HepG2 (cell line): ENCODE measurements at regions of chr2 and their contacts with region 1.

Region 1: GRCh38 chr2:74864846-74865722 is 31.2 kb downstream of the HK2 start:
- DNase-seq: no peak
- ATAC-seq: peak; percentile 60
- H3K4me3 ChIP-seq: no peak overlapping the region
- H3K27ac ChIP-seq: no peak overlapping the region
- H3K4me1 ChIP-seq: peaks cover 54% of the 10 kb centered on the region
- H3K27me3 ChIP-seq: no peaks in the 10 kb centered on the region
- CTCF ChIP-seq: peak; percentile 54
- EP300 ChIP-seq: no peak
- POLR2A ChIP-seq: peak in 1 of 2 experiments; percentile 24; a peak in 1 of 4 replicates
- RAD21 ChIP-seq: no peak

Region 2: DNA sequence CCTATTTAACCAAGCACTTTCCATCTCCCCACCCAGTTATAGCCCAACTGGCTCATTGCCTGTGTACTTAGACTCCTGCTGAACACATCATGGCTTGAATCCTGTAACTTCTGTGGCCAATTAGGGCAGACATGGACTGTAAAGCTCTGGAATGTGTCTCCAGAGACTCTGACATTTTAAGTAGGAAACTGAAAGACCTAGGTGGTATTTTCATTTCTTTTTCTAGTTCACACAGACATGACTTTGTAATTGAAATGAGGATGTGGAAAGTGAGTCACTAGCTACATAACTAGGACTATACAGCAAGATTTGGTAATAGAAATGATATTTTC is 298.4 kb before region 1 on chr2:
- CTCF ChIA-PET with region 1: no interaction called
- POLR2A ChIA-PET with region 1: no interaction called
- in situ Hi-C with region 1: no loop called
- intact Hi-C with region 1: no loop called
- DNase-seq: no peak
- ATAC-seq: no peak
- H3K4me3 ChIP-seq: no peak overlapping the region
- H3K27ac ChIP-seq: no peak overlapping the region
- H3K4me1 ChIP-seq: no peaks in the 10 kb centered on the region
- H3K27me3 ChIP-seq: peaks cover 0 to 50% of the 10 kb centered on the region in 2 experiments; a peak in 3 of 5 replicates
- CTCF ChIP-seq: no peak
- EP300 ChIP-seq: no peak
- POLR2A ChIP-seq: no peak
- RAD21 ChIP-seq: no peak

Region 3: GRCh38 chr2:74778381-74779264 is 86.5 kb before region 1 on chr2:
- CTCF ChIA-PET with region 1: no interaction called
- POLR2A ChIA-PET with region 1: no interaction called
- in situ Hi-C with region 1: no loop called
- intact Hi-C with region 1: loop called (anchors 1 kb)
- DNase-seq: peak; percentile 74
- ATAC-seq: peak; percentile 92
- H3K4me3 ChIP-seq: peak overlapping the region; percentile 14 to 67 (median 44)
- H3K27ac ChIP-seq: peak overlapping the region; percentile 53
- H3K4me1 ChIP-seq: peaks cover 47% of the 10 kb centered on the region
- H3K27me3 ChIP-seq: peaks cover 0 to 29% of the 10 kb centered on the region in 2 experiments; a peak in 3 of 5 replicates
- CTCF ChIP-seq: peak; percentile 36; the same call in 1 of the 2 replicates
- EP300 ChIP-seq: peak; percentile 13 to 53; a peak in 2 of 4 replicates
- POLR2A ChIP-seq: peak in 1 of 2 experiments; percentile 47; a peak in 2 of 4 replicates
- RAD21 ChIP-seq: peak; percentile 52; the same call in 1 of the 2 replicates

Region 4: GRCh38 chr2:74887445-74887951 is 22.4 kb after region 1 on chr2:
- CTCF ChIA-PET with region 1: no interaction called
- POLR2A ChIA-PET with region 1: no interaction called
- in situ Hi-C with region 1: no loop called
- intact Hi-C with region 1: no loop called
- DNase-seq: no peak
- ATAC-seq: no peak
- H3K4me3 ChIP-seq: no peak overlapping the region
- H3K27ac ChIP-seq: no peak overlapping the region
- H3K4me1 ChIP-seq: no peaks in the 10 kb centered on the region
- H3K27me3 ChIP-seq: no peaks in the 10 kb centered on the region
- CTCF ChIP-seq: no peak
- EP300 ChIP-seq: no peak
- POLR2A ChIP-seq: 0 out of 4 replicates have a peak, but pooled peaks of 1 of the 2 experiments have one; percentile 3
- RAD21 ChIP-seq: no peak